IMR-90 (cell line): ENCODE measurements at regions of chr5 and their contacts with region 1.

Region 1: GRCh38 chr5:175427762-175428161 is 16.2 kb downstream of the DRD1 start:
- DNase-seq: no peak
- ATAC-seq: no peak
- H3K4me3 ChIP-seq: no peak overlapping the region
- H3K27ac ChIP-seq: no peak overlapping the region
- H3K4me1 ChIP-seq: no peaks in the 10 kb centered on the region
- H3K27me3 ChIP-seq: no peaks in the 10 kb centered on the region
- CTCF ChIP-seq: no peak
- POLR2A ChIP-seq: no peak
- RAD21 ChIP-seq: no peak

Region 2: DNA sequence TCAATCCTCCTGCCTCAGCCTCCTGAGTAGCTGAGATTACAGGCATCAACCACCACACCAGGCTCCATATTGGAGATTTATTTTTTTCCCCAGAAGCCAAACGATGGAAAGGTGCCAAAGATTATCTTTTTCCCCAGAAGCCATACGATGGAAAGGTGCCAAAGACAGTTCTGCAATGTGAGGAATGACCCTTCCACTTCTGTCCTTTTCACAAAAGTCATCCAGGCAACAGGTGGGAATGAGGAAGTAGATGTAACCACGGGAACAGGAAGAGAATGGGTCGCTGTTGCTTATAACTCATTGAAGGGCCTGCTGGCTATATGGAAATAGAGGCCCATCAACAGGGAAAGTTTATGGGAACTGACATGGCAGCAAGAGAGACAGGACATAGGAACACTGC is 937.0 kb before region 1 on chr5:
- CTCF ChIA-PET with region 1: no interaction called
- POLR2A ChIA-PET with region 1: no interaction called
- dilution Hi-C with region 1: no loop called
- in situ Hi-C with region 1: no loop called
- intact Hi-C with region 1: no loop called
- DNase-seq: no peak
- ATAC-seq: no peak
- H3K4me3 ChIP-seq: no peak overlapping the region
- H3K27ac ChIP-seq: no peak overlapping the region
- H3K4me1 ChIP-seq: no peaks in the 10 kb centered on the region
- H3K27me3 ChIP-seq: peaks cover 2% of the 10 kb centered on the region; the same call in 1 of the 2 replicates
- CTCF ChIP-seq: no peak
- POLR2A ChIP-seq: no peak
- RAD21 ChIP-seq: no peak

Region 3: GRCh38 chr5:175001876-175002645 is 425.7 kb before region 1 on chr5:
- CTCF ChIA-PET with region 1: no interaction called
- POLR2A ChIA-PET with region 1: no interaction called
- dilution Hi-C with region 1: no loop called
- in situ Hi-C with region 1: no loop called
- intact Hi-C with region 1: no loop called
- DNase-seq: no peak
- ATAC-seq: no peak
- H3K4me3 ChIP-seq: no peak overlapping the region
- H3K27ac ChIP-seq: no peak overlapping the region
- H3K4me1 ChIP-seq: no peaks in the 10 kb centered on the region
- H3K27me3 ChIP-seq: no peaks in the 10 kb centered on the region
- CTCF ChIP-seq: no peak
- POLR2A ChIP-seq: no peak
- RAD21 ChIP-seq: no peak

Region 4: DNA sequence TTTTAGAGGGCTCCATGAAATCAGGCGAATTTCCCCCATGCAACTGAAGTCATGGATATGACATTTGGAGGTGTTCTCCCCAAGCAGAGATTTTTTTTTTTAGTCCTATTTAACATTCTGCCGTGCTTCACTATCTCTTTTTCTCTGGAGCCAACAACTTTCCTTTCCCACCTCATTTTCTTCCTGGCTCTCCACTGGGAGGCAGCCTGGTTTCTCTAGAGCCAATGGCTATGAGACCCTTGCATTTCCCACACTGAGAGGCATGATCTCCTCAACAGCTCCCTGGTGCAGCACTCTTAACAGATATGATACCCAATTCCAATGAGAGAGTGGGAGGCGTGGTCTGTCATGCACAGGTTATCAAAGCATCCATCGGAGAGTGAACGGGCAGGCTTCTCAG is 294.6 kb before region 1 on chr5:
- CTCF ChIA-PET with region 1: no interaction called
- POLR2A ChIA-PET with region 1: no interaction called
- dilution Hi-C with region 1: no loop called
- in situ Hi-C with region 1: no loop called
- intact Hi-C with region 1: loop called (anchors 5 kb)
- DNase-seq: no peak
- ATAC-seq: no peak
- H3K4me3 ChIP-seq: no peak overlapping the region
- H3K27ac ChIP-seq: no peak overlapping the region
- H3K4me1 ChIP-seq: no peaks in the 10 kb centered on the region
- H3K27me3 ChIP-seq: 0 out of 2 replicates have a peak, but pooled peaks cover 1% of the 10 kb centered on the region
- CTCF ChIP-seq: no peak; the same call in 1 of the 2 replicates
- POLR2A ChIP-seq: no peak
- RAD21 ChIP-seq: no peak

Region 5: DNA sequence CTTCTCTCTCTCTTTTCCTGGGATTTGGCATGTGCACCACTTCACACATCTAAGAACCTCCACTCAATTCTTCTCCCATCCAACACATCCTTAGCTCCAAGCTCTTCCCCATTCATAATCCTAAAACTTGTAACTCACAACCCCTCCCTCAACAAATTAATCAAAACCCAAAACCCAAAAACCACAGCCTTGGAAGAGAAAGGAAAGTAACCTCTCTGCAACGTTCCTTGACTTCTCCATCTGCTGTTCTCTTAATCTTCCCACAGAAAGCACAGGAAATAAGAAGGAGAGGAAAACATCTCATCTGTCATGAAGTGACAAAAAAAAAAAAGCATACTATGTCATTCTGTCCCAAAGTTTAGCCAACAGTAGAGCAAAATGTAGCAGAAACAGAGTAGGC is 49.9 kb before region 1 on chr5:
- CTCF ChIA-PET with region 1: no interaction called
- POLR2A ChIA-PET with region 1: no interaction called
- dilution Hi-C with region 1: no loop called
- in situ Hi-C with region 1: no loop called
- intact Hi-C with region 1: no loop called
- DNase-seq: no peak
- ATAC-seq: no peak
- H3K4me3 ChIP-seq: no peak overlapping the region
- H3K27ac ChIP-seq: no peak overlapping the region
- H3K4me1 ChIP-seq: peaks cover 3% of the 10 kb centered on the region; the same call in 1 of the 2 replicates
- H3K27me3 ChIP-seq: no peaks in the 10 kb centered on the region
- CTCF ChIP-seq: no peak
- POLR2A ChIP-seq: no peak
- RAD21 ChIP-seq: no peak

Region 6: GRCh38 chr5:175452166-175452565 is 24.4 kb after region 1 on chr5:
- CTCF ChIA-PET with region 1: no interaction called
- POLR2A ChIA-PET with region 1: no interaction called
- dilution Hi-C with region 1: no loop called
- in situ Hi-C with region 1: no loop called
- intact Hi-C with region 1: no loop called
- DNase-seq: no peak
- ATAC-seq: no peak
- H3K4me3 ChIP-seq: no peak overlapping the region
- H3K27ac ChIP-seq: no peak overlapping the region
- H3K4me1 ChIP-seq: no peaks in the 10 kb centered on the region
- H3K27me3 ChIP-seq: peaks cover 18% of the 10 kb centered on the region
- CTCF ChIP-seq: no peak
- POLR2A ChIP-seq: no peak
- RAD21 ChIP-seq: no peak